Cardiac septum (tissue), 1 donor: ENCODE measurements at regions of chr12 and their contacts with region 1.

Region 1: GRCh38 chr12:65556681-65557437 is 267.4 kb upstream of the HMGA2 start:
- DNase-seq: peak; percentile 86

Region 2: GRCh38 chr12:65685514-65685913 is 128.7 kb after region 1 on chr12:
- intact Hi-C with region 1: loop called (anchors 5 kb)
- DNase-seq: no peak

Region 3: GRCh38 chr12:66087365-66087943 is 530.6 kb after region 1 on chr12:
- intact Hi-C with region 1: loop called (anchors 5 kb)
- DNase-seq: no peak